Heart right ventricle (tissue), 16 donors: ENCODE measurements at regions of chr4 and their contacts with region 1.

Region 1: DNA sequence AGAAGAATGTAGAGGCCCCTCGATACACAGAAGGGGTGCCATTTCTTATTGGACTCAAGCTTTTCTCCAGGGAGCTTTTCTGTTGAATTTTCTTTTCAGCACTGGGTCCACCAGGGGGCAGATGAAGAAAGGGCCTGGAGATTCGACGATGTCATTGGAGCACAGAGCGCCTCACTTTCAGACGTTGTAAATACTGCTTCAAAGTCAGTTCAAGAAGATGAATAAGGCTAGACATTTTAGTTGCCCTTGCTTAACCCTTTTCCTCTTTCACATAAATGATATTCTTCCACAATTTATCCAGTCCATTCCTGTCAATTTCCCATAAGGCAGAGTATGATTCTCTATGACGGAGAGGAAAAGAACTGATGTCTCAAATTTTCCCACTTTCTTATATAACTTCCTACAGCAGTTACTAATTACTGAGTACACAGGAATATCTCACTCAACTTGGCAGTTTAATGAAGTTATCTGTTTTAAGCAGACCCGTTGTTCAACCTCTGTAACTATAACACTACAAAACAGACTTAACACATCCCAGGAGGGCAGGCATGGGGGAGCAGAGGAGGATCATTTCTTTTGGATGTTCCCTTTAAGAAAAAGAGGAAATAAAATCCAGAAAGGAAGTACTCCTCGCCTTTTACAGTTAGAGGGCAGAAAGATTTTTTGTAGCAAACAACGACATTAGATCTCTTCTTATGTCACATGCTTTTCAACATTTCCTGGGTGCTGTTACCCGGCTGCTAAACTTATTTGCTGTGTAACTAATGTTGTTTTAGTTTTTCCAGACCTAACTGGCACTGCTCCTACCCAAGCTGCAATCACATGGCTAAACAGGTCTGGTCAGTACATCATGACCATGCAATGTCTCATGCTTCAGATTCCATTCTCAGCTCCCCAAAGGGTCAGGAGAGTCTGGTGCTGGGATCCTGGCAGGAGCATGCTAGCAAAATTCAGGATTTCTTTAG is 12.2 kb upstream of the CENPU start:
- DNase-seq: peak; percentile 45 to 83
- ATAC-seq: peak; percentile 60 to 88 (median 80)
- H3K4me3 ChIP-seq: peak overlapping the region in 6 of 10 donors; percentile 1 to 20 (median 6)
- H3K27ac ChIP-seq: peak overlapping the region; percentile 67 to 89 (median 82)
- H3K4me1 ChIP-seq: peaks cover 13 to 54% (median 40%) of the 10 kb centered on the region in 9 donors
- H3K27me3 ChIP-seq: no peaks in the 10 kb centered on the region
- CTCF ChIP-seq: peak; percentile 52 to 87 (median 81)

Region 2: GRCh38 chr4:184815046-184815877 is 69.1 kb after region 1 on chr4:
- intact Hi-C with region 1: loop called in 5 of 10 experiments (anchors 5 kb)
- DNase-seq: peak; percentile 66 to 83
- ATAC-seq: peak; percentile 74 to 89 (median 80)
- H3K4me3 ChIP-seq: peak overlapping the region in 5 of 10 donors; percentile 2 to 9 (median 6)
- H3K27ac ChIP-seq: peak overlapping the region; percentile 86 to 98 (median 94)
- H3K4me1 ChIP-seq: peaks cover 7 to 100% (median 84%) of the 10 kb centered on the region in 9 donors
- H3K27me3 ChIP-seq: no peaks in the 10 kb centered on the region
- CTCF ChIP-seq: no peak

Region 3: DNA sequence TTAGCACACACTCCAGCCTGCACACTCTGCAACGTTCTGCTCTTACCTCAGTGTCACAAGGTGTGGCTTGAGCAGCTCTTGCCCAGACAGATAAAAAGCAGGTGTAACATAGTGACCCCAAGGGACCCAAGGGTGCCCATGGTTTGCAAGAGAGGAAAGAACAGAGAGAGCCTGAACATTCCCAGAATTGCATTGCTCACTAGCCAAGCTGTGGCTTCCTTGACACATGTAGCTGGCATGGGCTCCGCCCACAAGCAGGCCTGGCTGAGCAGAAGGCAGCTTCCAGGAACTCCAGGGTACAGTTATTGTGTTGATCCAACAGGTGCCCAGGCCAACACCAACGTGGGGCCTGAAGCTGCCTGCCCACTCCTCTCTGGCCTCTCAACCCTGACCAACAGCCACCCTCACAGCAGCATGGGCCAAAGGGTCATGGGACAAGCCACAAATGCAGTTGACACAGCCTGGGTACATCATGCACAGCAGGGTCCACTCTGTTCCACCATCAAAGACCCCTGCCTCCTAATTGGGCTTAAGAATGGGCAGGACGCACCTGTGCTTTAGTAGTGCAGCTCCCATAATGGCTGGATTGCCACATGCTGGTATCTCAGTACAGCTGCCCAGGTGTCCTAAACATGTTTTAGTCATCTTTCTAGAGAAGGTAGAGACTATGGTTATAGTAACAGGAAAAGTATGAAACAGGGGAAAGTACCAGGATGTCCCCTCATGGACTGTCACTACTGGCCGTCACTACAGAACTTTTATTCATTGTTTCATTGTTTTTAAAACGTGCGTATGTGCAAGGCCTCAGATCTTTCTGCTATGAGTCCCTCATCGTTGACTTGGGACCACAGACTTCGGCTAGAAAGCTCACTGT is 153.4 kb after region 1 on chr4:
- intact Hi-C with region 1: loop called in 2 of 10 experiments (anchors 10 kb)
- DNase-seq: no peak
- ATAC-seq: peak in 4 of 8 donors; percentile 43 to 61 (median 54)
- H3K4me3 ChIP-seq: no peak overlapping the region
- H3K27ac ChIP-seq: no peak overlapping the region
- H3K4me1 ChIP-seq: peaks cover 0 to 46% (median 5%) of the 10 kb centered on the region in 9 donors
- H3K27me3 ChIP-seq: peaks cover 0 to 8% (median 0%) of the 10 kb centered on the region in 7 donors
- CTCF ChIP-seq: no peak

Region 4: DNA sequence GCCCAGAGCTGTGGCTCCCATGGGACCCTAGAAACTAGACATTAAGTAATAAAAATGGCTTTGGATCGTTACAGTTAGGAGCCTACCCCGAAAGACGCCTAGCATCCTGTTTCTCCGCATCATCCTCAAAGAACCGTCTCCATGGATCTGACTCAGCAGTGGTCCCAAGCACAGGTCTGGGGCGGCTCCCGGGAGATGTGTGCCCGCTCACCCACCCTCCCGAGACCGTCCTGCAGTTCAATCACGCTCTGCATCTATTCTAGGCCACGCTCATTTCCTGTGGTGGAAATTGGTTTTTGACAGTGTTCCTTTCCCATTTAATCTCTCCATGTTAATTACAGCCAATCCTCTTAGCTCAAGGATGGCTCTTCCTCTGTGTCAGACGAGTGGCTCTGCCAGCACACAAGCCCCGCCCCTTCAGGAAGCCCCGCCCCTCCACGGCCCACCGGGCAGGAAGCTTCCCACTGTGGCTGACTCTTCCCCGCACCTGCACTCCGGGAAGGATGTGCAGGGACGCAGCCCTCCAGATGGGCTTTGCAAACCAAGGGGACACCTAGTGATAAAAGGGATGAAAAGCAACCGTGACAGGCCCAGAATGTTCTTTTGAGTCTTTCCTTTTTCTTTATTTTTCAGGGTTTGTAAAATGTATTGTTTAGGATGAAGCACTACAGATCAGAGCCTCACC is 237.7 kb after region 1 on chr4:
- intact Hi-C with region 1: loop called in 9 of 10 experiments (anchors 2 to 5 kb)
- DNase-seq: peak; percentile 48 to 69
- ATAC-seq: peak; percentile 58 to 78 (median 72)
- H3K4me3 ChIP-seq: peak overlapping the region in 2 of 10 donors; percentile 9 to 14
- H3K27ac ChIP-seq: no peak overlapping the region
- H3K4me1 ChIP-seq: peaks cover 3 to 21% (median 17%) of the 10 kb centered on the region in 9 donors
- H3K27me3 ChIP-seq: no peaks in the 10 kb centered on the region
- CTCF ChIP-seq: peak in 8 of 9 donors; percentile 12 to 68 (median 52)